PC-9 (cell line): ENCODE measurements at regions of chr17 and their contacts with region 1.

Region 1: DNA sequence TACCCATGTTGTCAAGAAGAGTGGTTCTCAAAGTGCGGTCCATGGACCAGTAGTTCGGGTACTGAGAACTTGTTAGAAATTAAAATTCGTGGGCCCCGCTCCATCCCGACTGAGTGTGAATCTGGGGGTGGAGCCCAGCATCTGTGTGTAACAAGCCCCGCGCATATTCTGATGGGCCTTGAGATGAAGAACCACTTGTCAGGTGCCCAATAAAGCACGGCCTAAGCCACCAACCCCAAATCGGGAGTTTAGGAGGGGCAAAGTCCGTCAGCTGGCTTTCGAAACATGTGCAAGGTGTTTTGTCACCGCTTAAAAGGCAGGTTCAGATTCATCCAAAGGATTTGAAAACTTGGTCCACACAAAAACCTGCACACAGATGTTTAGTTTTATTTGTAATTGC is 29.5 kb downstream of the PSMD12 start:
- DNase-seq: no peak
- H3K4me3 ChIP-seq: no peak overlapping the region
- H3K27ac ChIP-seq: no peak overlapping the region
- H3K4me1 ChIP-seq: no peaks in the 10 kb centered on the region; the same call in 1 of the 2 replicates
- H3K27me3 ChIP-seq: no peaks in the 10 kb centered on the region
- CTCF ChIP-seq: no peak

Region 2: DNA sequence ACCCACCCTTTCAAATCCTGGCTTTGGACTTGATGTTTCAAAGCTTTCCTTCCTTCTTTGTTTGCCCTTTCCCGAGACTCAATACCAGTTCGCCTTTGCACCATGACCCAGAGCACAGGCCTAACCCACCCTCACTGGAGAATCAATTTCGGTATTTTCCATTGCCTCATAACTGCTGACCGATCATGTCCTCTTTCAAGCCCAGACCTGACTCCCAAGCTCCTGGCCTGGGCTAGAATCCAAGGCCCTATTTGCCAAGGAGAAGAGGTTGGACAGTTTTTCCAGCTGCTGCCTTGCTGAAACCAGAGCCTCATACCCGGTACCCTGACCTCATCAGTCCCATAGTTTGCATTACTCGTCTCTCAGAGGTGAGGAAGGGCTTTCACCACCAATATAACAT is 56.6 kb before region 1 on chr17:
- CTCF ChIA-PET with region 1: no interaction called
- POLR2A ChIA-PET with region 1: no interaction called
- intact Hi-C with region 1: loop called (anchors 5 kb)
- DNase-seq: no peak
- H3K4me3 ChIP-seq: no peak overlapping the region
- H3K27ac ChIP-seq: no peak overlapping the region
- H3K4me1 ChIP-seq: peaks cover 14% of the 10 kb centered on the region
- H3K27me3 ChIP-seq: no peaks in the 10 kb centered on the region
- CTCF ChIP-seq: no peak

Region 3: DNA sequence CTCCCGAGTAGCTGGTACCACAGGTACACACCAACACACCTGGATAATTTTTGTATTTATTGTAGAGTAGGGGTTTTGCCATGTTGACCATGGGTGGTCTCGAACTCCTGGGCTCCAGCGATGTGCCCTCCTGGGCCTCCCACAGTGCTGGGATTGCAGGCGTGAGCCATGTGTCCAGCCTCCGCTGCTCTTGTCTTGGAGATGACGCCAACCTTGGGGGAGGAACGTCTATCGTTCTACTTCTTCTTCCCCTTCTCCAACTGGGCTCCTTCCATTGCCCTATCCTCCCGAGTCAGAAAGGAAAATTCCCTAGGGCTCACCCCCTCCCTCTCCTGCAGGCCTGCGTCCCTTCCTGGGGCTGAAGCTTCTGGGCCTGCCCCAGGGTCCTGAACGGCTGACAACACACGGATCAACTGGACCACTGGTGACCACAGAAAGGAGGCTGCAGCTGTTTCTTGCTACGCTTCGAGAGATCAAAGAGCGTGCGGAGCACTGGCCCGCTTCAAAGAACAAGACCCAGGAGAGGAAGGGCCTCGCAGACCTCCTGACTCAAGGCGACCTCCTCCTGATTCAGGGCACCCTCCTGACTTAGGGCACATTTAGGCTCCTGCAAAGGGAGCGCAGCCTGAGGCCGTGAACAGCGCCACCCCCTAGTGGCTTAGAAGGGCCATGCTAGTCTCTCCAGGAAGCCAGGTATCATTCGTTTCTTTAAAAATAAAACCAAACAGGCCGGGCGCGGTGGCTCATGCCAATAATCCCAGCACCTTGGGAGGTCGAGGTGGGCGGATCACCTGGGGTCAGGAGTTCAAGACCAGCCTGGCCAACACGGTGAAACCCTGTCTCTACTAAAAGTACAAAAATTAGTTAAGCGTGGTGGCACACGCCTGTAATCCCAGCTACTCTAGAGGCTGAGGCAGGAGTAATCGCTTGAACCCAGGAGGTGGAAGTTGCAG is 43.3 kb before region 1 on chr17:
- CTCF ChIA-PET with region 1: no interaction called
- POLR2A ChIA-PET with region 1: no interaction called
- intact Hi-C with region 1: no loop called
- DNase-seq: peak in 1 of 2 experiments; percentile 22
- H3K4me3 ChIP-seq: no peak overlapping the region
- H3K27ac ChIP-seq: no peak overlapping the region
- H3K4me1 ChIP-seq: no peaks in the 10 kb centered on the region
- H3K27me3 ChIP-seq: no peaks in the 10 kb centered on the region
- CTCF ChIP-seq: peak; percentile 65